ENCODE measurements at regions of chr21 and their contacts with region 1.

Region 1: GRCh38 chr21:31299291-31300147 is 44.5 kb downstream of the TIAM1 start:
- DNase-seq: no peak
- ATAC-seq: no peak
- H3K4me3 ChIP-seq: no peak overlapping the region
- H3K4me3 Mint-ChIP-seq: no peak overlapping the region
- H3K27ac ChIP-seq: no peak overlapping the region
- H3K27ac Mint-ChIP-seq: no peak overlapping the region
- H3K4me1 ChIP-seq: no peaks in the 10 kb centered on the region
- H3K4me1 Mint-ChIP-seq: peaks cover under 1 to 5% of the 10 kb centered on the region in 2 donors
- H3K27me3 ChIP-seq: no peaks in the 10 kb centered on the region
- H3K27me3 Mint-ChIP-seq: no peaks in the 10 kb centered on the region
- CTCF ChIP-seq: no peak

Region 2: GRCh38 chr21:31370893-31371544 is 71.5 kb after region 1 on chr21:
- intact Hi-C with region 1: loop called (anchors 10 kb)
- DNase-seq: no peak
- ATAC-seq: no peak
- H3K4me3 ChIP-seq: no peak overlapping the region
- H3K4me3 Mint-ChIP-seq: no peak overlapping the region
- H3K27ac ChIP-seq: no peak overlapping the region
- H3K27ac Mint-ChIP-seq: no peak overlapping the region
- H3K4me1 ChIP-seq: peaks cover 7% of the 10 kb centered on the region
- H3K4me1 Mint-ChIP-seq: peaks cover 0 to 5% of the 10 kb centered on the region in 2 donors
- H3K27me3 ChIP-seq: no peaks in the 10 kb centered on the region
- H3K27me3 Mint-ChIP-seq: no peaks in the 10 kb centered on the region
- CTCF ChIP-seq: no peak

Region 3: GRCh38 chr21:31386006-31386405 is 86.5 kb after region 1 on chr21:
- intact Hi-C with region 1: no loop called
- DNase-seq: no peak
- ATAC-seq: no peak
- H3K4me3 ChIP-seq: no peak overlapping the region
- H3K4me3 Mint-ChIP-seq: no peak overlapping the region
- H3K27ac ChIP-seq: no peak overlapping the region
- H3K27ac Mint-ChIP-seq: no peak overlapping the region
- H3K4me1 ChIP-seq: no peaks in the 10 kb centered on the region
- H3K4me1 Mint-ChIP-seq: peaks cover 10 to 11% of the 10 kb centered on the region in 2 donors
- H3K27me3 ChIP-seq: no peaks in the 10 kb centered on the region
- H3K27me3 Mint-ChIP-seq: no peaks in the 10 kb centered on the region
- CTCF ChIP-seq: no peak

Measured in natural killer cell (primary cell).